AG04449 (cell line): ENCODE measurements at regions of chr9 and their contacts with region 1.

Region 1: DNA sequence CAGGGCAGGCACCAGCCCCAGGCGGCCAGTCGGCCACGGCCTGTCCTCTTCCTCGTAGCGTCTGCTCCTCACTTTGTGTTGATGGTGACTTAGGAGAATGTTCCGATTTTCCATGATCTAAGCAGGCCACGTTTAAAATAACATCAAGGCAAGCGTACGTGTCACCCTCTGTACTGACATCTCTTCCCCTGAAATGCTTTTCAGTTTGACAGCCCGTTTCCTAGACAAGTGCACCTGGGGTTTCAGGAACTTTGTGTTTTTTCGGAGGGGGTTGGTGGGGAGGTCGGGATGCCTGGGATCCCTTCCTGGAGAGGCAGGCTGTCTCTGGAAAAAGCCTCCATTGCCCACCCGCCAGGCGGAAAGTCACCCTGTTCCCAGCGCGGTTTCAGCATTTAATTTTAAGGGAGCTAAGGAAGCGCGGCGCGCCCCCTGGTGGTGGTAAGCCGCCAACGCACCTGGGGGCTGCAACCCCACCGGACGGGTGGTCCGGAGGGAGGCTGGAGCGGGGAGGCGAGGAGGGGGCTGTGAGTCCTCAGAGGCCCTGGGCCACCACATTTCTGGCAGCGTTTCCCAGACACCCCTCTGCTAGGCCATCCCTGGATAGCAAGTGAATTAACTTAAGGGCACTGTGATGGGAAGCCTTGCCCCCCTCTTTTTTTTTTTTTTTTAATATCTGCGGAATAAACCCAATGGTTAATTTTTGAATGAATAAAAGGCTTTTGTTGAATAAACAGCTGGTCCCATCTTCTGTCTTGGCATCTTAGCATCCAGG is 29.5 kb upstream of the HMCN2 start:
- DNase-seq: no peak
- H3K4me3 ChIP-seq: no peak overlapping the region
- CTCF ChIP-seq: peak; percentile 97

Region 2: DNA sequence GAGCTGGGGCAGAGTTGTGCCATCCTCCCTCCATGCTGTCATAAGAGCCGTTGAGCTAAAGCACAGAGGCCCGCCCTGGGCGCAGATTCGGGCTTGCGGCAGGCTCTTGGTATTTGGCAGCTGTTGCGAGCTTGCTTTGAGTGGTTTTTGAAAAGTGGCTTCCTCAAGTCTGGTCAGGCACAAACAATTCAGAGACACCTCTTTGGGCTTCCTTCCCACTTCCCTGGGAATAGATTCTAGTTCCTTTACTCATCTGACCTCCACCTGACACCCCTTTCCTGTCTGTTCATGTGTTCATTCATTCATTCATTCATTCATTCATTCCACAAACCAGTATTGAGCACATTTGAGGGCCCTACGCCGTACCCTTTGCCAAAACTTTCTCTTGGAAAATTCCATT is 36.5 kb before region 1 on chr9:
- CTCF ChIA-PET with region 1: interaction called, 10 read pairs
- POLR2A ChIA-PET with region 1: no interaction called
- DNase-seq: no peak
- H3K4me3 ChIP-seq: no peak overlapping the region
- CTCF ChIP-seq: no peak

Region 3: GRCh38 chr9:130220352-130220751 is 15.7 kb before region 1 on chr9:
- CTCF ChIA-PET with region 1: interaction called, 20 read pairs
- POLR2A ChIA-PET with region 1: no interaction called
- DNase-seq: no peak
- H3K4me3 ChIP-seq: no peak overlapping the region; the same call in 1 of the 2 replicates
- CTCF ChIP-seq: peak; percentile 58

Region 4: GRCh38 chr9:130718562-130718961 is 482.5 kb after region 1 on chr9:
- CTCF ChIA-PET with region 1: no interaction called
- POLR2A ChIA-PET with region 1: no interaction called
- DNase-seq: no peak
- H3K4me3 ChIP-seq: no peak overlapping the region
- CTCF ChIP-seq: no peak